PC-9 (cell line): ENCODE measurements at regions of chr19 and their contacts with region 1.

Region 1: GRCh38 chr19:52237771-52238400 is 31.5 kb upstream of the ZNF766 start:
- DNase-seq: peak; percentile 58 to 63
- H3K4me3 ChIP-seq: no peak overlapping the region
- H3K27ac ChIP-seq: no peak overlapping the region
- H3K4me1 ChIP-seq: no peaks in the 10 kb centered on the region
- H3K27me3 ChIP-seq: peaks cover 5% of the 10 kb centered on the region
- CTCF ChIP-seq: peak; percentile 96

Region 2: GRCh38 chr19:52171321-52172169 is 66.3 kb before region 1 on chr19 and contains the start of gene ZNF836:
- CTCF ChIA-PET with region 1: interaction called, 19 read pairs
- POLR2A ChIA-PET with region 1: no interaction called
- intact Hi-C with region 1: no loop called
- DNase-seq: peak; percentile 67 to 88
- H3K4me3 ChIP-seq: peak within 1 kb of the TSS; percentile 95
- H3K27ac ChIP-seq: no peak within 1 kb of the TSS
- H3K4me1 ChIP-seq: peaks cover 18% of the 10 kb centered on the region
- H3K27me3 ChIP-seq: no peaks in the 10 kb centered on the region
- CTCF ChIP-seq: no peak
- total RNA-seq, gene ZNF836: 12.2 and 14.3 TPM in 2 replicates